Mammary epithelial cell (primary cell): ENCODE measurements at regions of chr6 and their contacts with region 1.

Region 1: DNA sequence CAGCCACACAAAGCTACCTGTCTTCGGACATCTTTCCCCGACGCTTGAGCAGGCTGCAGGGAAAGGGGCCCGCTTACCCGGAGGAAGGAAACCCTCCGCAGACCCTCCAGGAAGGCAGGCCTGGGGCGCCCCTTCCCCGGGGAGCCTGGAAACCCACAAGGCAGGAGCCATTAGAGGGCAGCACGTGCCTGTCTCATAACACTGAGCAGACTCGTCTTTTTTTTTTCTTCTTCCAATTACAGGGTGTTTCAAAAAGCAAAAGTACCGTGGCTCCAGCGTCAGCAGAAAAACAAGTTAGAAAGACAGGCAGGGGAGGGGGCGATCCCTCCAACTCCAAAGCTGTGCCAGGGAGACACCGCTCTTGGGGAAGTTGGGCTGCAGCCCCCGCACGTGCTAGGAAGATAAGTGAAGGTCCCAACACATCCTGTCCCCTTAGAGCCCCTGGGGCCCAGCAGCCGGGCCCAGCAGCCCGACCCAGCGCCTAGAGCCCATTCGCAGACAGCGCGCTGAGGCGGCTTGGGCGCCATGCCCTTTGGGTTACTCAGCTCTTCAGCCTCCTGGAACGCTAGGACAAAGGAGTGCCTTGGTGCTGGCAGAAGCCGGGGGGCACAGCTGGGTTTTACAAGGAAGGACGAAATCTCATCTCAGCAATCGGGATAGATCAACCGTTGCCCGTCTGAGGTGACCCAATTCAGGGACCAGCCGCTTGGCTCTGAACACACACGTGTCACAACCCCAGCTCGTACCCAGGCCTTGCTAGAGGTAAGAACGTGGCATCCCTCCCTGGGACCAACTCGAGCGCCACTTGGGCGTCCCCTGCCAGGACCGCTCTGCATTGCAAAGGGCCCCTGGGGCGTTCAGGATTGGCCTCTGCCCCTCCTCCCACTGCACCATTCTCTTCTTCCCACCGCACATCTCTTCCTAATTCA is 136.3 kb downstream of the LY86 start:
- DNase-seq: peak; percentile 55
- H3K4me3 ChIP-seq: peak overlapping the region; percentile 26 to 47 (median 34)
- H3K27ac ChIP-seq: no peak overlapping the region
- H3K4me1 ChIP-seq: peaks cover 13% of the 10 kb centered on the region
- H3K27me3 ChIP-seq: no peaks in the 10 kb centered on the region
- CTCF ChIP-seq: peak; percentile 49 to 78

Region 2: DNA sequence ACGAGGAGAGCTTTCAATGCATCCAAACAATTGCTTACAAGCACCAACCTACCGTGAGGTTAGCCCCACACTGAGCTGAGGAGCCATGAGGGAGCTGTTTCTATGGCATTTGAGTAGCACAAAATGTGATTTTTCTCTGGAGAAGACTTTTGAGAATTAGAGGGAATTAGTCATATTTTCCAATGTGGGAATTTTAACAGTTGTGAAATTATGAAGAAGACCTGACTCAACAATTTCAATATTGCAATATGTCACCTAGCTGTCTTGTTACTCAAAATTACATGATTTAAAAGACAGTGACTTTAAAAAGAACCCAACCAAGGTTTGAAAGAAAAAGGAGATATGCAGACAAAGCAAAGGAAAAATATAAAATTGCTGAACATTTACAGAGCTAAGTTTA is 198.9 kb before region 1 on chr6:
- CTCF ChIA-PET with region 1: no interaction called
- dilution Hi-C with region 1: no loop called
- in situ Hi-C with region 1: no loop called
- intact Hi-C with region 1: no loop called
- DNase-seq: no peak
- H3K4me3 ChIP-seq: no peak overlapping the region
- H3K27ac ChIP-seq: no peak overlapping the region
- H3K4me1 ChIP-seq: no peaks in the 10 kb centered on the region
- H3K27me3 ChIP-seq: no peaks in the 10 kb centered on the region
- CTCF ChIP-seq: no peak

Region 3: DNA sequence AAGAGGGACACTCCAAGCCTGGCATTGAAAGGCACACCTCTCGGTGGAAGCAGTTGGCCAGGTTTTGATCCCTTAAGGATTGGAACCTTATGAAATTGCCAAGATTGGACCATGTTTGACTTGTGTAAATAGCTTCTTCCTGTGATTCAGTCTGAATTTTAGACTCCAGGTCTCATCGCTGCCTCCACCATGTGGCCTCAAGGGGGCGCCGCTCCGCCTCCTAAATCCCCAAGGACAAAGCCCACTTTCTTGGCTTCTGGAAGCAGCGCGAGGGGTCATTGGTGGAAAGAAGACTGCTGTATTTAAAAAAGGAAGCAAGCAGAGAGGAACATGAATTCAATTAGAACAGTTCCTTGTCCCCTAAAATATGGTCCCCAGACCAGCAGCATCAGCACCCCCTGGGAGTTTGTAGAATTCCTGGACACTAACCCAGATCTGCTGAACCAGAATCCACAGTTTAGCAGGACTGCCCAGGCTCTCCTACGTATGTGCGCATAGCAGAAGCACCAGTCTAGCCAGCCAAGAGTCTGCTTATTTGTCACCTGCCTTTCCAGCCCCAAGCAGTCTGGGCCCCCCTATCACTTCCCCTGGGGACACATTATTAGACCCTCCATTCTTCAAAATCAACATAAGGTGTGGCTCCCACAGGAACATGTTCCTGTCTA is 27.8 kb before region 1 on chr6:
- CTCF ChIA-PET with region 1: interaction called, 22 read pairs
- dilution Hi-C with region 1: no loop called
- in situ Hi-C with region 1: no loop called
- intact Hi-C with region 1: no loop called
- DNase-seq: peak; percentile 50
- H3K4me3 ChIP-seq: no peak overlapping the region
- H3K27ac ChIP-seq: no peak overlapping the region
- H3K4me1 ChIP-seq: peaks cover 14% of the 10 kb centered on the region
- H3K27me3 ChIP-seq: no peaks in the 10 kb centered on the region
- CTCF ChIP-seq: peak; percentile 79 to 83

Region 4: DNA sequence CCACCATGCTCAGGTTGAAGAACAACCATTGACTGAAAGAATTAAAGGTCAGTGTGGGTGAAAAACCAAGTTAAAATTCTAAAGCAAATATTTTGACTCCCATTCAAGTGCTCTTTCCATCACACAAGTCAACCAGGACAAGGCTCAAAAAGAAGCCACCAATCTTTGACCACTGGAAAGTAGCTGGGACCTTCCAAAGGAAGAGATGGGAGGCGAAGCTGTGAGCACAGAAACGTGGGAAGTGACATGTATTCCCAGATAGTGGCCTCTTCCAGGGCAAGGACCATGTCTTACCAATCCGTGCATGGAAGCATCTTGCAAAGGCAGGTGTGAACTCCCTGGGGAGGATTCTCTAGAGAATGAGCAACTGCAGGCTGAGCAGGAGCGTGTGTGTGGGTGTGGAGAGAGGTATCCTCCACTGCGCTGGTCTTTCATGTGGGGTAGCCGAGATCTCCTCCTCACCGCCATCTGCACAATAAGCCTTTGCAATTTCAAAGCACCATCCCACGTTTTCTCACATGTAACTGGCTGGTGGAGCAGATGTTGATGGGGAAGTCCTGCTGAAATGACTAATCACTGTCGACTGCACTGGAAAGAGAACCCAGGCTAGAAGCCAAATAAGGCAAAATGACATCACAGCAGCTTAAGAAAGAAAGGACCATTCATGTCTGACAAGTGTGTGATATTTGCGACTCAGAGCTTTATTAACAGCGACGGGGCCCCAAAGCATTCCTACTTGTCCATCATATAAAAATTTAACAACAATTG is 193.6 kb after region 1 on chr6:
- CTCF ChIA-PET with region 1: no interaction called
- dilution Hi-C with region 1: no loop called
- in situ Hi-C with region 1: no loop called
- intact Hi-C with region 1: loop called (anchors 5 kb)
- DNase-seq: peak; percentile 71
- H3K4me3 ChIP-seq: no peak overlapping the region
- H3K27ac ChIP-seq: no peak overlapping the region
- H3K4me1 ChIP-seq: peaks cover 13% of the 10 kb centered on the region
- H3K27me3 ChIP-seq: no peaks in the 10 kb centered on the region
- CTCF ChIP-seq: no peak

Region 5: DNA sequence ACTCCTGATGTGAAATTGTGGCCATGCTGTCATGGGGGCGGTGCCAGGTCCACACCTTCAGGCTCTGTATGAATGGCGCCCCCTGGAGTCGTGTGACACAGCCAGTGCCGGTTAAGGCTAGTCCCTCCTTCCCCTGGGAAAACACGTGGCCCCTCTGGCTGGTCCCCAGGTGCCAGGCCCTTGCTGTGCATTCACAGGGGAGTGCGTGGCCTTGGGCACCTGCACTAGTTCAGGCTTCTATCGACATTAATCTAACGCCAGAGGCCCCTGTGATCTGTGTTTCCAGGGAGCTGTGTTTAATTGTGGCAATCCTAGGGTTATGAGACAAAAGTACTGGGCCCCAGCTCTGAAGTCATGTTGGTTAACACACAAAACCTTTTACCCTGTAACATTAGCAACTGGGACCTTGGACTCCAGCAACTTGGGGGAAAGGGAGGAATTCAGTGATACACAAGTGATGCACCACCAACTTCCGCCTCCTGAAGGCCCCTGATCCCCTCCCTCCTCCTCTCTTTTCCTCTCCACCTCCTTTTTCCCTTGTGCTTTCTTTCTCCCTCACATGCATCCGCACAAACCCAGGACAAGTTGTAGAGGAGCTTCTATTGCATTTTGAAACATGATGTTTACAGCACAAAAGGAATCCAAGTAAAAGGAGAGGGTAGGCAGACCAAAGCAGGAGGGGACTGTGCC is 514.2 kb after region 1 on chr6:
- CTCF ChIA-PET with region 1: no interaction called
- dilution Hi-C with region 1: no loop called
- in situ Hi-C with region 1: loop called (anchors 5 to 10 kb)
- intact Hi-C with region 1: loop called (anchors 1 kb)
- DNase-seq: peak; percentile 58
- H3K4me3 ChIP-seq: no peak overlapping the region
- H3K27ac ChIP-seq: no peak overlapping the region
- H3K4me1 ChIP-seq: peaks cover 15% of the 10 kb centered on the region
- H3K27me3 ChIP-seq: no peaks in the 10 kb centered on the region
- CTCF ChIP-seq: peak; percentile 42 to 72

Region 6: DNA sequence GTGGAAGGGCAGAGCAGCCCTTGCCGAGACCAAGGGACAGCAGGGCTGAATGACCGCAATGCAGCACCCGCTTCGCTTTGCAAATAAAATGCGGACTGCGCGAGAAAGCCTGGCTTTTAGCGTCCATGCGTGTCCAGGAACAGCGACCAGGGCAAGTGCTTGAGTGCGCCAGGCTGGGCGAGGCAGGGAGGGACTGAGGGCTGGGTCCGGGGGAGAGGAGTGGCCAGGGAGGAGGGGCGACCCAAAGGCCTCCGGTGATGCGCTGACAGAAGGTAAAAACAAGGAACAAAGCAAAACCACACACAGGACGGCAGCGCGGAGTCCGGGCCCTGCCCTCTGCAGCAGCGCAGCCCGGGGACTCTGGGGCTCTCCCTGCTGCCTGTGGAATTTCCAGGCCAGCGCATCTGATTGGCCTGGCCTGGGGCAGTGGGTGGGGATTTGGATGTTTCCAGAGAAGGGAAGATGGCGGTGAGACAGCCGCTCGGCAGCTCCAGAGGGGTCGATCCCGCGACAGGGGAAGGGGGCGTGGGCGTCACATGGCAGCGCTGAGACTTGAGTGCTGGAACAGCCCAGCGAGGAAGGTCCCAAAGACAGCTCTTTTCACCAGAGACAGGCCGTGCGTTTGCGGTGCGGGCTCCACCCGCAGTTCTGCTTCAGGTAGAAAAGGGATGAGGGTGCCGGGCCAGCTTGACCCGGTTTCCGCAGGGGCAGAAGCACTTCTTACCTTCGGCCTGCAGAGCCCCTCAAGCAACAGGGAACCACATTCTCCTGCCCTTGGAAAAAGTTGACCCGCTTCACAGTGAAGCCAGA is 536.4 kb after region 1 on chr6:
- CTCF ChIA-PET with region 1: no interaction called
- dilution Hi-C with region 1: loop called (anchors 25 kb)
- in situ Hi-C with region 1: no loop called
- intact Hi-C with region 1: no loop called
- DNase-seq: peak; percentile 93
- H3K4me3 ChIP-seq: peak overlapping the region; percentile 40 to 66 (median 60)
- H3K27ac ChIP-seq: peak overlapping the region; percentile 64
- H3K4me1 ChIP-seq: peaks cover 18% of the 10 kb centered on the region
- H3K27me3 ChIP-seq: no peaks in the 10 kb centered on the region
- CTCF ChIP-seq: no peak

Region 7: GRCh38 chr6:7803219-7803618 is 1078.4 kb after region 1 on chr6:
- CTCF ChIA-PET with region 1: no interaction called
- dilution Hi-C with region 1: no loop called
- in situ Hi-C with region 1: no loop called
- intact Hi-C with region 1: no loop called
- DNase-seq: peak; percentile 3
- H3K4me3 ChIP-seq: no peak overlapping the region
- H3K27ac ChIP-seq: no peak overlapping the region
- H3K4me1 ChIP-seq: no peaks in the 10 kb centered on the region
- H3K27me3 ChIP-seq: peaks cover 2% of the 10 kb centered on the region
- CTCF ChIP-seq: no peak